ENCODE measurements at regions of chr1 and their contacts with region 1.

Region 1: GRCh38 chr1:169106095-169106920 is at the start of gene ATP1B1:
- DNase-seq: peak; percentile 89 to 94 (median 90)
- ATAC-seq: peak; percentile 53 to 89 (median 79)
- H3K4me3 ChIP-seq: peak within 1 kb of the TSS; percentile 72 to 95 (median 88)
- H3K27ac ChIP-seq: peak within 1 kb of the TSS; percentile 83 to 98 (median 94)
- H3K4me1 ChIP-seq: peaks cover 0 to 63% (median 25%) of the 10 kb centered on the region in 12 donors
- H3K27me3 ChIP-seq: peaks cover 0 to 9% (median 0%) of the 10 kb centered on the region in 9 donors
- CTCF ChIP-seq: peak; percentile 46 to 79 (median 64)
- POLR2A ChIP-seq: peak; percentile 73 to 97
- total RNA-seq, gene ATP1B1: 245 to 640 (median 339) TPM

Region 2: DNA sequence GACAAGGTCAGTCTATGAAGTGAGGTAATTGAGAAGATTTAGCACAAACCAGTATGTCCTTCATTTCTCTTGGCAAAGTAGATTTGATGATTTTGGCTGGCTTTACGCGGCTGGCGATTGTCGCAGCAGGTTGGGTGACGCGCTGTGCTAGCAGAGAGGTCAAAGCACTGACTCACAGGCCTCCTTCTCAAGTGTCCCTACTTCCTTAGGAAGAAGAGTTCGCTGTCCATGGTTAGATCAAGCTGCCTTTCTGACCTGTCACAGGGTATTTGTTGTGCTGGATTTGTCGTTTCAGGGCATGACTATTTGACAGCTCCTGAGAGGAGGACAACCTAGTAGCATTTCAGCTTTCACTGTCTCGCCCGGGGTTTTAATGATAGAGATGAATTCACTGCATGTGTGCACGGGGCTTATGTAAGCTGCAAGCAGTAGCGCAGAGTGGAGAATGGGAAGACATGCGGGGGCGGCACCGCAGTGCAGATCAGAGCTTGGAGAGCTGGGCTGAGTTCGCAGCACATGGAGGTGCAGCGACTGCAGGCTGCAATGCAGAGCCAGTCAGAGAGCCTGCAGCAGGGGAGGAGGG is 497.1 kb before region 1 on chr1:
- intact Hi-C with region 1: loop called in 4 of 10 experiments (anchors 5 to 10 kb)
- DNase-seq: peak; percentile 49 to 64 (median 64)
- ATAC-seq: peak; percentile 37 to 66 (median 64)
- H3K4me3 ChIP-seq: peak overlapping the region in 3 of 12 donors; percentile 5 to 19 (median 14)
- H3K27ac ChIP-seq: peak overlapping the region in 8 of 12 donors; percentile 29 to 64 (median 42)
- H3K4me1 ChIP-seq: peaks cover 0 to 36% (median 16%) of the 10 kb centered on the region in 12 donors
- H3K27me3 ChIP-seq: no peaks in the 10 kb centered on the region
- CTCF ChIP-seq: no peak
- POLR2A ChIP-seq: no peak

Region 3: DNA sequence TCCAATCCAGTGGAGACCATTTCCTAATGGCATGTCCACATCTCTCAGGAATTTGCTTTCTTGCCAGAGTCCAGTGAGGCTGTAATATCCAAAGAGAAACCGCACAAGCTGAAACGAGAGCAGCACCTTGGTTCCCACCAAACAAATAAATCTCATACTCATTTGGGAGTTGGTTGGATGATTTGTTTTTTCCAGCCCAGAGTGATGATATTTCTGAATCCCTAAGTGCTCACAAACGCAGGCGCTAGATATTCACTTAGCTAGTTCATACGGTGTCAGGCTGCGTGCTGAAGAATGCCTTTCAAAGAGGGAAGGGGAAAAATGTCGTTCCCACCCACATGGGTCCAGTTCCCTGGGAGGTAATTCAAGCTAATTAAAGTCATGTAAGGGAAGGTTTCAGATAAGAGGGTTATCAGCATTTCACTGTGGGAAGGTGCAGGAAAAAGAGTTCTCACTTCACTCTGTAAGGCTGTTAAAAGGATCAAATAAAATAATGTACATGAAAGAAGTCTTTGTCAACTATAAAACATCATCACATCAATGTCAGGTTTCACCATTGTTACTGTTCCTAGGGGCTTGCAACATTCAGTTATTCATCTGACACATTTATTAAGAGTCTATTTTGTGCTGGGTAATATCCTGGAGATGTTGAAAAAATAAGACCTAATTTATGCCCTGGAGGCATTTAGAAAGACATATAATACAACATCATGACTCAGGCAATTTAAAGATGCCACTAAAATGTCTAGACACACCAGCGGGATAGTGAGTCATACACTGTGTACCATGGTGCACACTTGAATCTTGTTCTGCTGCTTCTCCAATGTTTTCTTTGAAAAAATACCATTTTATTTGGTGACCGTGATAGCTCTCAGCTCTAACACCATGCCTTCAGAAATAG is 396.7 kb before region 1 on chr1:
- intact Hi-C with region 1: loop called in 2 of 10 experiments (anchors 10 kb)
- DNase-seq: peak in 3 of 5 donors; percentile 24 to 45 (median 27)
- ATAC-seq: peak; percentile 63 to 88 (median 78)
- H3K4me3 ChIP-seq: peak overlapping the region in 2 of 12 donors; percentile 9 to 18
- H3K27ac ChIP-seq: peak overlapping the region in 11 of 12 donors; percentile 18 to 74 (median 60)
- H3K4me1 ChIP-seq: peaks cover 0 to 36% (median 11%) of the 10 kb centered on the region in 12 donors
- H3K27me3 ChIP-seq: no peaks in the 10 kb centered on the region
- CTCF ChIP-seq: no peak
- POLR2A ChIP-seq: no peak

Region 4: GRCh38 chr1:168774241-168774640 is 332.1 kb before region 1 on chr1:
- intact Hi-C with region 1: loop called in 1 of 10 experiments (anchors 5 kb)
- DNase-seq: peak; percentile 61 to 83 (median 67)
- ATAC-seq: peak; percentile 85 to 99 (median 98)
- H3K4me3 ChIP-seq: no peak overlapping the region
- H3K27ac ChIP-seq: peak overlapping the region in 2 of 12 donors; percentile 28 to 30
- H3K4me1 ChIP-seq: peaks cover 0 to 21% (median 1%) of the 10 kb centered on the region in 12 donors
- H3K27me3 ChIP-seq: no peaks in the 10 kb centered on the region
- CTCF ChIP-seq: peak in 1 of 12 donors; percentile 3
- POLR2A ChIP-seq: no peak

Region 5: GRCh38 chr1:168845140-168845539 is 261.2 kb before region 1 on chr1:
- intact Hi-C with region 1: loop called in 1 of 10 experiments (anchors 10 kb)
- DNase-seq: no peak
- ATAC-seq: peak in 2 of 4 donors; percentile 43 to 75
- H3K4me3 ChIP-seq: no peak overlapping the region
- H3K27ac ChIP-seq: no peak overlapping the region
- H3K4me1 ChIP-seq: peaks cover 0 to 13% (median 2%) of the 10 kb centered on the region in 12 donors
- H3K27me3 ChIP-seq: no peaks in the 10 kb centered on the region
- CTCF ChIP-seq: no peak
- POLR2A ChIP-seq: no peak

Region 6: GRCh38 chr1:169044296-169044695 is 62.0 kb before region 1 on chr1:
- intact Hi-C with region 1: loop called in 2 of 10 experiments (anchors 1 to 5 kb)
- DNase-seq: no peak
- ATAC-seq: peak; percentile 30 to 75 (median 56)
- H3K4me3 ChIP-seq: no peak overlapping the region
- H3K27ac ChIP-seq: peak overlapping the region in 1 of 12 donors; percentile 79
- H3K4me1 ChIP-seq: peaks cover 0 to 44% (median 4%) of the 10 kb centered on the region in 12 donors
- H3K27me3 ChIP-seq: no peaks in the 10 kb centered on the region
- CTCF ChIP-seq: no peak
- POLR2A ChIP-seq: no peak

Measured in heart left ventricle (tissue), 16 donors.